ENCODE measurements at regions of chr3 and their contacts with region 1.

Region 1: GRCh38 chr3:113495035-113495434 is 19.9 kb downstream of the SPICE1 start:
- DNase-seq: peak; percentile 36 to 50
- ATAC-seq: peak; percentile 86

Region 2: GRCh38 chr3:113626503-113627371 is 131.7 kb after region 1 on chr3:
- intact Hi-C with region 1: loop called in 1 of 2 experiments (anchors 5 kb)
- DNase-seq: peak in 1 of 2 donors; percentile 55
- ATAC-seq: peak; percentile 59

Region 3: GRCh38 chr3:113685956-113686754 is 191.1 kb after region 1 on chr3:
- intact Hi-C with region 1: no loop called
- DNase-seq: no peak
- ATAC-seq: no peak